ENCODE measurements at regions of chr15 and their contacts with region 1.

Region 1: GRCh38 chr15:66946578-66947164 is 118.7 kb upstream of the SMAD3 start:
- DNase-seq: no peak
- H3K4me3 ChIP-seq: no peak overlapping the region
- H3K27ac ChIP-seq: no peak overlapping the region
- H3K4me1 ChIP-seq: no peaks in the 10 kb centered on the region
- H3K27me3 ChIP-seq: no peaks in the 10 kb centered on the region
- CTCF ChIP-seq: peak; percentile 90 to 94 (median 92)
- POLR2A ChIP-seq: no peak

Region 2: GRCh38 chr15:67303490-67304363 is 357.1 kb after region 1 on chr15:
- intact Hi-C with region 1: loop called (anchors 10 kb)
- DNase-seq: no peak
- H3K4me3 ChIP-seq: no peak overlapping the region
- H3K27ac ChIP-seq: no peak overlapping the region
- H3K4me1 ChIP-seq: no peaks in the 10 kb centered on the region
- H3K27me3 ChIP-seq: no peaks in the 10 kb centered on the region
- CTCF ChIP-seq: peak in 2 of 3 experiments; percentile 48 to 77
- POLR2A ChIP-seq: no peak

Region 3: DNA sequence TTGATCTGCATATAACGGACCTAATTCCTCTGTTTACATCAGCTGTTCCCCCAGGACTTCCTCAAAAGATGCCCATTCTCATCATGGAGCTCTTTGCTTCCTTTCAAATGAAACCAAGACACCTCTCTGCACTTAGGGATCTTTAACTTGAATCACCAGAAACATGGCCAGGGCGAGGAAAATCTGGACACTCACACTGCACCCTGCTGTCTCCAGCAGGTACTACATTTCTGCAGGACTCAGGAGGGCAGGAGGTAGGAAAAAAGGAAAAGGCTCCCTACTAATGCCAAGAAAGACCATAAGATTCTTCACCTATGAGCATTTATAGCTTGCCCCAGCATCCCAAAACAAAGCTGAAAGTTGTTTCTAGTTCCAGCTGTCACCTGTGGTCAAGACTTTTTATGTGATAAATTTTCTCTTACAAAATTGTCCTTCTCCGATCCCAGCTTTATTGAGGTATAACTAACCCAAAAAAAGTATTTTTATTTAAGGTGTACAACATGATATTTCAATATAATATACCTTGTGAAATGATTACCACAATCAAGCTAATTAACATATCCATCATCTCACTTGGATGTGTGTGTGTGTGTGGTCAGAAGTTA is 486.9 kb after region 1 on chr15:
- intact Hi-C with region 1: loop called (anchors 5 kb)
- DNase-seq: no peak
- H3K4me3 ChIP-seq: no peak overlapping the region
- H3K27ac ChIP-seq: no peak overlapping the region
- H3K4me1 ChIP-seq: no peaks in the 10 kb centered on the region
- H3K27me3 ChIP-seq: no peaks in the 10 kb centered on the region
- CTCF ChIP-seq: peak; percentile 6 to 53 (median 23)
- POLR2A ChIP-seq: no peak